Colonic mucosa (tissue), 4 donors: ENCODE measurements at regions of chr9 and their contacts with region 1.

Region 1: GRCh38 chr9:112447283-112447761 is 39.3 kb upstream of the KIAA1958 start:
- DNase-seq: no peak
- H3K4me3 ChIP-seq: no peak overlapping the region
- H3K27ac ChIP-seq: no peak overlapping the region
- H3K4me1 ChIP-seq: no peaks in the 10 kb centered on the region
- H3K27me3 ChIP-seq: no peaks in the 10 kb centered on the region
- CTCF ChIP-seq: no peak

Region 2: DNA sequence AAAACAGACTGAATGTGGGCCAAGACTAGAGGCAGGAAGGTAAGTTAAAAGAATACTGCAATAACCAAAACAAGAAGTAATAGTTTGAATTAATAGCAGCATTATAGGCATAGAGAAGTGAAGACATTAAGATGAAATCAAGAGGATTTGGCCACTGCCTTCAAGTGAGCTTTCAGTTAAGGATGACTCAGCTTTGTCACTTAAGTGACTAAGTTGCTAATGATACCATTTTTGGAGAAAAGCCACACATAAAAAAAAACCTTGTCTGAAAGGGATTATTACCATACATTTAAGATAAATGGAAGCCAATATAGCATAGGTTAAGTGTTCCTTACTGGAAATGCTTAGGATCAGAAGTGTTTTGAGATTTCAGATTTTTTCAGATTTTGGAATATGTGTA is 1020.1 kb before region 1 on chr9:
- intact Hi-C with region 1: no loop called
- DNase-seq: no peak
- H3K4me3 ChIP-seq: no peak overlapping the region
- H3K27ac ChIP-seq: no peak overlapping the region
- H3K4me1 ChIP-seq: no peaks in the 10 kb centered on the region
- H3K27me3 ChIP-seq: no peaks in the 10 kb centered on the region
- CTCF ChIP-seq: no peak

Region 3: GRCh38 chr9:112705768-112706427 is 258.6 kb after region 1 on chr9:
- intact Hi-C with region 1: loop called (anchors 10 kb)
- DNase-seq: no peak
- H3K4me3 ChIP-seq: no peak overlapping the region
- H3K27ac ChIP-seq: no peak overlapping the region
- H3K4me1 ChIP-seq: no peaks in the 10 kb centered on the region
- H3K27me3 ChIP-seq: no peaks in the 10 kb centered on the region
- CTCF ChIP-seq: peak; percentile 24